ENCODE measurements at regions of chr16 and their contacts with region 1.

Region 1: DNA sequence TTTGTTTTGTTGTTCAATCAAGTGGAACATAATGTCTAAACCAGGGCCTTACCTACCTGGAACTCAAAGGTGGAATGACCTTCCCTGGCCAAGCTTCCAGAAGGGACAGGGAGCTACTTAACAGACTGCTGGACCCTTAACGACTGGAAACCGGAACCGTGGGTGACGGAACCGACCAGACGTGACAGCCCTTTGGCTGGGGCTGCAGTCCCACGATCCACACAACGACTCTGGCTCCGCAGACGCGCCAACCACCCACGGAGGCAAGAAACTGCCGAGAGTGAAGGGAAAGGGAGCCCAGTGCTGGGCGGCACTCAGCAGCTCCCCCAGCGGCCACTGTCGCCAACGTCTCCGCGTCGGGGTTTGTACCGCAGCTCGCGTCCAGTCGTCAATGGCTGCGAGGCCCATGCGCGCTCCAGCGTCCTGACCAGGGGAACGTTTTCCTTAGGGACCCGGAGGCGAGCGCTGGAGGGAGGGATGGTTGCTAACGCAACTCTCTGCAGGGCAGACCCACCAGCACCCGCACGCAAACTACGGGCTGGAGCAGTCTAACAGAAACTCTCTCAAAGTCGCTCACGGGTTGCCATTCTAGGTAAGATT is 5.5 kb upstream of the KIF22 start:
- DNase-seq: peak; percentile 83
- ATAC-seq: peak; percentile 95
- H3K4me3 Mint-ChIP-seq: peak overlapping the region; percentile 47
- H3K27ac Mint-ChIP-seq: no peak overlapping the region
- H3K4me1 Mint-ChIP-seq: peaks cover 25% of the 10 kb centered on the region
- H3K27me3 Mint-ChIP-seq: peaks cover 10% of the 10 kb centered on the region

Region 2: GRCh38 chr16:29738514-29738913 is 46.5 kb before region 1 on chr16:
- CTCF ChIA-PET with region 1: interaction called, 24 read pairs
- POLR2A ChIA-PET with region 1: interaction called, 9 read pairs
- DNase-seq: peak; percentile 66
- ATAC-seq: peak; percentile 83
- H3K4me3 Mint-ChIP-seq: peak overlapping the region; percentile 40
- H3K27ac Mint-ChIP-seq: peak overlapping the region; percentile 77
- H3K4me1 Mint-ChIP-seq: peaks cover 60% of the 10 kb centered on the region
- H3K27me3 Mint-ChIP-seq: peaks cover 3% of the 10 kb centered on the region

Region 3: GRCh38 chr16:29753516-29753915 is 31.5 kb before region 1 on chr16:
- CTCF ChIA-PET with region 1: interaction called, 16 read pairs
- POLR2A ChIA-PET with region 1: interaction called, 4 read pairs
- DNase-seq: no peak
- ATAC-seq: no peak
- H3K4me3 Mint-ChIP-seq: no peak overlapping the region
- H3K27ac Mint-ChIP-seq: no peak overlapping the region
- H3K4me1 Mint-ChIP-seq: peaks cover 23% of the 10 kb centered on the region
- H3K27me3 Mint-ChIP-seq: no peaks in the 10 kb centered on the region

Region 4: DNA sequence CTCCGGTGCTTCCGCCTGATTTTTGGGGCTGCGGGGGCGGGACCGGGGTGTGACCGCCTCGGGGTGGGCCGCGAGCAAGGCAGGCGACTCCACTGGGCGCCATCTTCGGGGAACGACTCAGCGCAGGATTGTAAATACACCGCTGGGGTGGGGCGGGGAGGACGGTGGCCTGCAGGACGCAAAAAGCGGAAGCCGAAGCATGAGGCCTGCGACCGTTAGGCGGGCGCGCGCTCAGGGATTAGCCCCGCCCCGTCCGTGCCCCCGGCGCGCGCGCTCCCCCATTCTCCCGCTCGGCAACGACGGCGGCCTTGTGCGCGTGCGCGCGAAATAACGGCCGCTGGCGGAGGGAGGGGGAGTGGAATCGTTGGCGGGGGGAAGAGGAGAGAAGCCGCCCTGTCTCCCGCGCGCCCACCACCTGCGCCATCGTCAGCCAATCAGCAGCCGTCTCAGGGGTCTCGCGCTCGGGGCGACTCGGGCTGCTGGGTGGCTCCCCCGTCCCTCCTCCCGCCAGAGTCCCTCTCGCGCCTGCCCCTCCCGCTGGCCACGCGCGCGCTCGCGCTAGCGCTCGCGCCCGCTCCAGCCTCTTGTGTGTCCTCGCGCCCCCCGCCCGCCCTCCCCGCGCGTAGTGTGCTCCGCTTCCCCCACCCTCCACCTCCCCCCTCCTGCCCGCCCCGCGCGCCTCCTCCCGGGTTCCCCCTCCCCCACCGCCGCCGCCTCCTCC is 20.5 kb after region 1 on chr16:
- CTCF ChIA-PET with region 1: interaction called, 36 read pairs
- POLR2A ChIA-PET with region 1: interaction called, 89 read pairs
- DNase-seq: peak; percentile 99
- ATAC-seq: peak; percentile 72
- H3K4me3 Mint-ChIP-seq: peak overlapping the region; percentile 89
- H3K27ac Mint-ChIP-seq: peak overlapping the region; percentile 93
- H3K4me1 Mint-ChIP-seq: peaks cover 49% of the 10 kb centered on the region
- H3K27me3 Mint-ChIP-seq: no peaks in the 10 kb centered on the region

Region 5: GRCh38 chr16:29839822-29840221 is 54.8 kb after region 1 on chr16:
- CTCF ChIA-PET with region 1: no interaction called
- POLR2A ChIA-PET with region 1: no interaction called
- DNase-seq: no peak
- ATAC-seq: no peak
- H3K4me3 Mint-ChIP-seq: no peak overlapping the region
- H3K27ac Mint-ChIP-seq: no peak overlapping the region
- H3K4me1 Mint-ChIP-seq: no peaks in the 10 kb centered on the region
- H3K27me3 Mint-ChIP-seq: no peaks in the 10 kb centered on the region

Region 6: GRCh38 chr16:29883987-29884386 is 99.0 kb after region 1 on chr16:
- CTCF ChIA-PET with region 1: no interaction called
- POLR2A ChIA-PET with region 1: no interaction called
- DNase-seq: no peak
- ATAC-seq: no peak
- H3K4me3 Mint-ChIP-seq: no peak overlapping the region
- H3K27ac Mint-ChIP-seq: no peak overlapping the region
- H3K4me1 Mint-ChIP-seq: no peaks in the 10 kb centered on the region
- H3K27me3 Mint-ChIP-seq: peaks cover 6% of the 10 kb centered on the region